Gastrocnemius medialis (tissue), 4 donors: ENCODE measurements at regions of chr18 and their contacts with region 1.

Region 1: GRCh38 chr18:55589625-55590291 is 1.8 kb upstream of the TCF4 start:
- DNase-seq: peak; percentile 95 to 96
- ATAC-seq: peak; percentile 81 to 86
- H3K4me3 ChIP-seq: peak overlapping the region; percentile 67 to 86 (median 78)
- H3K27ac ChIP-seq: peak overlapping the region; percentile 88 to 93 (median 91)
- H3K4me1 ChIP-seq: peaks cover 4 to 6% of the 10 kb centered on the region in 2 donors
- H3K27me3 ChIP-seq: no peaks in the 10 kb centered on the region
- CTCF ChIP-seq: no peak
- POLR2A ChIP-seq: peak; percentile 56 to 74

Region 2: DNA sequence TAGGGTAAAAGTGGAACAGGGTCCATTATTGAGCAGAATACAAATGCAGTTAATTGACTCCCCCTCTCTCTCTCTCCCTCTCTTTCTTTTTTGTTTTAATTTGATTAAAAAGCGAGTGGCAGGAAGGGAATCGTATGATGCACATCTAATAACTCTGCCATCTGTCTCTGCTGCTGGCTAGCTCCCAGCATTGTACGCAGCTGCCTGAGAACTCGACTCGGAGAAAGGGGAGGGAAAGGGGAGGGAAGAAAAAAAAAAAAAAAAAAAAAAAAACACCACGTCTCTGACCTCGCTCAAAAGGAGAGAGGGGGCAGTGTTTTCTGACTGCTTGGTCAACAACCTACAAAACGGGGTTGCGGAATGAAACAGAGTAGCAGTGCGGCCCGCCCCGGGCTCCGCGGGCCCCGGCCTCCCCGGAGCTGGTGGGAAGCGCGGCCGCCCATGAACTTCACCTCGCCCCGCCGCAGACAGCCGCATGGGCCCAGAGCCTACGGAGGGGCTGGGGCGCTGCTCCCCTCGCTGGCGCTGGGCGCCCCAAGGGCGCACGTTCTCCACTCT is 267.5 kb before region 1 on chr18:
- in situ Hi-C with region 1: loop called (anchors 5 to 10 kb)
- intact Hi-C with region 1: loop called (anchors 2 kb)
- DNase-seq: peak; percentile 77 to 90
- ATAC-seq: peak; percentile 88 to 90
- H3K4me3 ChIP-seq: peak overlapping the region; percentile 57 to 82 (median 73)
- H3K27ac ChIP-seq: peak overlapping the region; percentile 93 to 95 (median 94)
- H3K4me1 ChIP-seq: peaks cover 53 to 54% of the 10 kb centered on the region in 2 donors
- H3K27me3 ChIP-seq: no peaks in the 10 kb centered on the region
- CTCF ChIP-seq: peak in 2 of 5 experiments; percentile 12 to 17
- POLR2A ChIP-seq: peak; percentile 68 to 84

Region 3: DNA sequence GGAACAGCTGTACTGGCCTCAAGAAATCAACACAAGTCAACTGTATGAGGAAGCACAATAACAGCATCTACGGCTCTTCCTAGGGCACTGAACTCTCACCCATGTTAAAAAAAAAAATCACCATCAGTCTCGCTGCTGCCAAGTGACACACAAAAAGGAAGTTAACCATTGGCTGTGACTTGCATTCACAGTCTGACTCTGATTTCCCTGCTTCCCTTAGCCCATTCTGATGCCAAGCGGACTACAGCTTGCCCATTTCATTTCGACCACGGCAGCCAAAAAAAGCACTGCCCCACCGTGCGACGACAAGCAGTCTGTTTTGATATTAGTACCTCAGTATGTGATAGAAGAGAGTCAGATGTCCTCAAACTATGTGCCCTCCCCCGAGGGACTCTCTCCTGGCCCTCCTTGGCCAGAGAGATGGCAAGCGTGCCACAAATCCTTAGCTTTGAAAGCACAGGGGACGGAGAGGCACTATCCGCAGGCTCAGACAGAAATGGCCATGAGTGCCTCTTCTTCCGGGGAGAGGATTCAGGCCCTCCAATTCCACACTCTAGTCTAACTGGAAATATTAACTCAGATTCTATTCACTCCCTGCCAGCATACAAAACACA is 251.7 kb before region 1 on chr18:
- in situ Hi-C with region 1: no loop called
- intact Hi-C with region 1: loop called (anchors 5 kb)
- DNase-seq: peak in 1 of 2 donors; percentile 48
- ATAC-seq: peak; percentile 79 to 82
- H3K4me3 ChIP-seq: peak overlapping the region; percentile 39 to 53 (median 45)
- H3K27ac ChIP-seq: peak overlapping the region; percentile 75 to 85 (median 82)
- H3K4me1 ChIP-seq: peaks cover 43 to 61% of the 10 kb centered on the region in 2 donors
- H3K27me3 ChIP-seq: no peaks in the 10 kb centered on the region
- CTCF ChIP-seq: no peak
- POLR2A ChIP-seq: peak in 1 of 2 donors; percentile 13

Region 4: DNA sequence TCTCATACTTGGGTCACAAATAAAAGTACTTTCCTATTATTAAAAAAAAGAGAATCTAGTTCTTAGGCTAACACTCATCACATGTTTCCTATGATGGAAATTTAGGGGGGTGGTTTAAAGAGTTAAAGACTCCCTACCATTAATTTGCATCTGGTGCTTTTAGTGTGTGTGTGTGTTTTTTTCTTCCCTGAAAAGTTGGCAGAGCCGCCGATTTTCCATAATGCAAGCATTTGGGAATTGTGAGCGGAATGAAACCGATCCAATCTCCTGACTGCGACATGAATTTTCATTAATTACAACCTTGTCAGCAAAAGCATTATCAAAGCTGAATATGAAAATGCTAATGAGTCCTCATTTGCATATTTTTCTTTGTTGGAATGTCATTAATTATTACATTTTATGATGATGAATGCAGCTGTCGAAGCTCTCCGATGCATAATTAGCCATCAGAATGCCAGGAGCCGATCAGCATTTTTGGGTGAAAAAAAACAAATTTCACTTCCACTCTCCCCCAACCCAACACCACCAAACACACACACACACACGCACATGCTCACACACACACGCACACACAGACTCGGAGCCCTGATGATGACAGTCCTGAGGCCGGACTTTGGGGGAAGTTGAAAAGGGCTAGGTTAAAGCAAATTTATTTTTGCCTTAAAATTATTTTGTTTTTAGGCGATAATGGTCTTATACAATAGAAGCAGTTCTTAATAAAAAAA is 167.1 kb before region 1 on chr18:
- in situ Hi-C with region 1: loop called (anchors 5 to 10 kb)
- intact Hi-C with region 1: loop called (anchors 1 kb)
- DNase-seq: peak; percentile 18 to 45
- ATAC-seq: peak; percentile 40 to 52
- H3K4me3 ChIP-seq: peak overlapping the region; percentile 50 to 52 (median 52)
- H3K27ac ChIP-seq: peak overlapping the region; percentile 73 to 92 (median 89)
- H3K4me1 ChIP-seq: peaks cover 23 to 25% of the 10 kb centered on the region in 2 donors
- H3K27me3 ChIP-seq: no peaks in the 10 kb centered on the region
- CTCF ChIP-seq: no peak
- POLR2A ChIP-seq: peak in 1 of 2 donors; percentile 35

Region 5: DNA sequence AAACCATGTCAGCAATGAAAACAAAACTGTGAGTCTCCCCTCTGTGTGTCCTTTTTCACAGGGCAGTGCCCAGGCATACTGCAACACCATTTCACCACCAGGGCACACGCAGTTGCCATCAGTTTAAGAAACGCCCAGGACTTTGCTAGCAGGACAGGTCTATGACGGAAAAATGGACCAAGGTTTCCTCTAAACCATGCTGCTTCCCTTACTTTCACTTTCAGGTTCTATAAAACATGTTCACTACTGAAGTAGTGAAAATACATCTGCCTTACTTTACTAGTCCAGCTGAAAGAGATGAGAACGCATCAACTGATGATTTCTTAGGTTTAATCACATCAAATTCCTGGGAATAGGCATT is 112.3 kb before region 1 on chr18:
- in situ Hi-C with region 1: no loop called
- intact Hi-C with region 1: loop called (anchors 5 kb)
- DNase-seq: peak in 1 of 2 donors; percentile 48
- ATAC-seq: peak; percentile 70 to 90
- H3K4me3 ChIP-seq: peak overlapping the region; percentile 53 to 72 (median 58)
- H3K27ac ChIP-seq: peak overlapping the region; percentile 75 to 82 (median 78)
- H3K4me1 ChIP-seq: peaks cover 7 to 37% of the 10 kb centered on the region in 2 donors
- H3K27me3 ChIP-seq: no peaks in the 10 kb centered on the region
- CTCF ChIP-seq: peak in 3 of 5 experiments; percentile 16 to 51 (median 43)
- POLR2A ChIP-seq: no peak

Region 6: GRCh38 chr18:55861266-55861665 is 271.5 kb after region 1 on chr18:
- in situ Hi-C with region 1: no loop called
- intact Hi-C with region 1: loop called (anchors 10 kb)
- DNase-seq: no peak
- ATAC-seq: peak in 1 of 2 donors; percentile 33
- H3K4me3 ChIP-seq: no peak overlapping the region
- H3K27ac ChIP-seq: no peak overlapping the region
- H3K4me1 ChIP-seq: peaks cover 3 to 10% of the 10 kb centered on the region in 2 donors
- H3K27me3 ChIP-seq: peaks cover 40 to 53% (median 51%) of the 10 kb centered on the region in 3 donors
- CTCF ChIP-seq: peak in 3 of 5 experiments; percentile 20 to 32 (median 22)
- POLR2A ChIP-seq: no peak

Region 7: GRCh38 chr18:56638271-56639093 is 1048.7 kb after region 1 on chr18 and contains the start of gene TXNL1:
- in situ Hi-C with region 1: no loop called
- intact Hi-C with region 1: loop called (anchors 10 kb)
- DNase-seq: peak; percentile 99
- ATAC-seq: peak; percentile 96 to 97
- H3K4me3 ChIP-seq: peak within 1 kb of the TSS; percentile 92 to 96 (median 94)
- H3K27ac ChIP-seq: peak within 1 kb of the TSS; percentile 97 to 99 (median 98)
- H3K4me1 ChIP-seq: peaks cover 23 to 37% of the 10 kb centered on the region in 2 donors
- H3K27me3 ChIP-seq: no peaks in the 10 kb centered on the region
- CTCF ChIP-seq: no peak
- POLR2A ChIP-seq: peak; percentile 90 to 92
- total RNA-seq, gene TXNL1: 100 to 125 (median 116) TPM